Psoas muscle (tissue), 8 donors: ENCODE measurements at regions of chr17 and their contacts with region 1.

Region 1: GRCh38 chr17:7989781-7990655 is 12.4 kb upstream of the GUCY2D start:
- DNase-seq: peak; percentile 83 to 90
- ATAC-seq: peak; percentile 89 to 96 (median 90)
- H3K4me3 ChIP-seq: peak overlapping the region; percentile 79
- H3K27ac ChIP-seq: no peak overlapping the region
- H3K4me1 ChIP-seq: no peaks in the 10 kb centered on the region
- H3K27me3 ChIP-seq: no peaks in the 10 kb centered on the region
- CTCF ChIP-seq: peak; percentile 95

Region 2: DNA sequence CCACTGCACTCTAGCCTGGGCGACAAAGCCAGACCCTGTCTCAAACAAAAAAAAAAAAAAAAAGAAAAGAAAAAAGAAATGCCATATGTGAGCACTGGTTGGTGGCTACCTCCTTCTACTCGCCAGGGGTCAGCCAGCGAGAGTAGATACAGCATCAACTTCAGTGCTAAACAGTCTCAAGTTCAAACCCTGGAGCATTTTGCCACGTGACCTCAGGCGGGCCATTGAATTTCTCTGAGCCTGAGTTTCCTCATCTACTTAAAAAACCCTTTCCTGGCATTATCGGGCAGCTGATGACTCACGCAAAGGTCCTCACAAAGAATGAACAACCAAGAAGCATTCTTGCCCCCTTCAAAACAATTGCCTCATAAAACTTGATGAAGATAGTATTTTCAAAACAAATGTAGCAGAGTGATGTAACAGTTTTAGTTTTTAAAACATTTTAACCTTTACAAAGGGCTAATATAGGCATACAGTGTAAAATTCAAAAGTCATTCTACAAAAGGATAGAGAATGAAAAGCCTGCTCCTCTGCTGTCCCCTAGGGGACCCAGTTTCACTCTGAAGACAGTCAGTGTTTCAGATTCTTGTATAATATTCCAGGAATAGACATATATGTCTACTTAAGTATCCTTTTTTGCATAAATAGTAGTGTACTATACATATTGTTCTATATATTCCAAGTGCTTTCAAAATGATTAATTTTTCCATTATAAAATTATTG is 244.1 kb before region 1 on chr17:
- intact Hi-C with region 1: loop called (anchors 5 kb)
- DNase-seq: no peak
- ATAC-seq: no peak
- H3K4me3 ChIP-seq: no peak overlapping the region
- H3K27ac ChIP-seq: no peak overlapping the region
- H3K4me1 ChIP-seq: no peaks in the 10 kb centered on the region
- H3K27me3 ChIP-seq: peaks cover 0 to 4% (median 4%) of the 10 kb centered on the region in 3 donors
- CTCF ChIP-seq: no peak

Region 3: GRCh38 chr17:7825206-7825990 is 164.6 kb before region 1 on chr17:
- intact Hi-C with region 1: loop called in 1 of 2 experiments (anchors 2 kb)
- DNase-seq: no peak
- ATAC-seq: peak; percentile 54 to 81 (median 66)
- H3K4me3 ChIP-seq: no peak overlapping the region
- H3K27ac ChIP-seq: no peak overlapping the region
- H3K4me1 ChIP-seq: no peaks in the 10 kb centered on the region
- H3K27me3 ChIP-seq: no peaks in the 10 kb centered on the region
- CTCF ChIP-seq: peak; percentile 30

Region 4: GRCh38 chr17:7856883-7857723 is 132.9 kb before region 1 on chr17 and contains the start of gene NAA38:
- intact Hi-C with region 1: loop called (anchors 1 to 2 kb)
- DNase-seq: peak; percentile 96 to 98
- ATAC-seq: peak; percentile 88 to 92 (median 90)
- H3K4me3 ChIP-seq: peak within 1 kb of the TSS; percentile 86
- H3K27ac ChIP-seq: peak within 1 kb of the TSS; percentile 93
- H3K4me1 ChIP-seq: peaks cover 27% of the 10 kb centered on the region
- H3K27me3 ChIP-seq: no peaks in the 10 kb centered on the region
- CTCF ChIP-seq: peak; percentile 43
- total RNA-seq, gene NAA38: 60.8 to 95.4 (median 73.3) TPM

Region 5: GRCh38 chr17:7862692-7863437 is 127.2 kb before region 1 on chr17:
- intact Hi-C with region 1: loop called (anchors 1 to 2 kb)
- DNase-seq: no peak
- ATAC-seq: no peak
- H3K4me3 ChIP-seq: no peak overlapping the region
- H3K27ac ChIP-seq: no peak overlapping the region
- H3K4me1 ChIP-seq: peaks cover 12% of the 10 kb centered on the region
- H3K27me3 ChIP-seq: no peaks in the 10 kb centered on the region
- CTCF ChIP-seq: peak; percentile 82

Region 6: GRCh38 chr17:7915611-7916382 is 74.2 kb before region 1 on chr17 and contains the start of gene RNF227:
- intact Hi-C with region 1: loop called (anchors 1 to 2 kb)
- DNase-seq: peak; percentile 88 to 95
- ATAC-seq: peak; percentile 83 to 93 (median 92)
- H3K4me3 ChIP-seq: peak within 1 kb of the TSS; percentile 87
- H3K27ac ChIP-seq: peak within 1 kb of the TSS; percentile 85
- H3K4me1 ChIP-seq: peaks cover 21% of the 10 kb centered on the region
- H3K27me3 ChIP-seq: no peaks in the 10 kb centered on the region
- CTCF ChIP-seq: no peak
- total RNA-seq, gene RNF227: 0.62 to 2.6 (median 1.0) TPM

Region 7: GRCh38 chr17:8057691-8058114 is 67.7 kb after region 1 on chr17:
- intact Hi-C with region 1: loop called in 1 of 2 experiments (anchors 5 kb)
- DNase-seq: no peak
- ATAC-seq: peak; percentile 80 to 92 (median 84)
- H3K4me3 ChIP-seq: no peak overlapping the region
- H3K27ac ChIP-seq: no peak overlapping the region
- H3K4me1 ChIP-seq: peaks cover 2% of the 10 kb centered on the region
- H3K27me3 ChIP-seq: peaks cover 3 to 38% (median 10%) of the 10 kb centered on the region in 3 donors
- CTCF ChIP-seq: peak; percentile 77